HepG2 (cell line): ENCODE measurements at regions of chr3 and their contacts with region 1.

Region 1: DNA sequence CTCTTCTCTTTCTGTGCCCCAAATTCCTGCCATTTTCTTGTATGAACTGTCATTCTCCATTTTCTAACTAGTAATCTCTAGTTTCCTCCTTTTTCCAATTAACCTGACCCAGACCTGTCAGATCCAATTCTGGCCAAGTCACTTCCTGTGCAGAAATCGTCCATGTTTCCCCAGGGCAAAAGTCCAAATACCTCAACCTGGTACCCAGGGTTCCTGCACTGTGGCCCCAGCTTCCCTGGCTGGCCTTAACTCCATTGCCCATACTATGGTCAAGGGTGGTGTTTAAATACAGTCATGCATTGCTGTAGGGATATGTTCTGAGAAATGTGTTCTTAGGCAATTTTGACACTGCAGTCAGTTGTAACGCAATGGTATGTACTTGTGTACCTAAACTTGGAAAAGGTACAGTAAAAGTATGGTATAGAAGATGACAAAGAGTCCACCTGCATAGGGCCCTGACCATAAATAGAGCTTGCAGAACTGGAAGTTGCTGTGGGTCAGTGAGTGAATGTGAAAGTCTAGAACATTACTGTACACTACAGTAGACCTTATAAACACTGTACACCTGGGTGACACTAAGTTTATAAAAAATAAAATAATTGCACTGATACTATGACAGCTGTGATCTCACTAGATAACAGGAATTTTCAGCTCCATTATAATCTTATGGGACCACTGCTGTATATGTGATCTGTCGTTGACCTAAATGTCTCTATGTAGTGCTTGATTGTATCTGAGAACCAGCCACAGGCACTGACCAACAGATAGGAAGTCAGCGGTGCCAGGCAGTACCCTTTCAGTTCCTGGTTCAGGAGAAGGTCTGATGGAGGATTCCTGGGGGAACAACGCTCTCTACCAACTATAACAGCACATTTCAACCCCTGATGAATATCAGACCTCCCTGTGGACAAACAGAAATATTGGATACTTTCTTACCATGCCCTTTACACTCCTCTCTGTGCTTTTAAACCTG is 336.1 kb upstream of the PROK2 start:
- DNase-seq: no peak
- ATAC-seq: peak; percentile 60
- H3K4me3 ChIP-seq: no peak overlapping the region
- H3K27ac ChIP-seq: no peak overlapping the region
- H3K4me1 ChIP-seq: peaks cover 21% of the 10 kb centered on the region
- H3K27me3 ChIP-seq: no peaks in the 10 kb centered on the region
- CTCF ChIP-seq: no peak
- EP300 ChIP-seq: no peak
- POLR2A ChIP-seq: no peak
- RAD21 ChIP-seq: no peak

Region 2: GRCh38 chr3:72143322-72143721 is 22.2 kb after region 1 on chr3:
- CTCF ChIA-PET with region 1: no interaction called
- POLR2A ChIA-PET with region 1: no interaction called
- in situ Hi-C with region 1: no loop called
- intact Hi-C with region 1: loop called (anchors 2 kb)
- DNase-seq: peak; percentile 54
- ATAC-seq: peak; percentile 76
- H3K4me3 ChIP-seq: no peak overlapping the region; a peak in 1 of 6 replicates
- H3K27ac ChIP-seq: no peak overlapping the region
- H3K4me1 ChIP-seq: peaks cover 49% of the 10 kb centered on the region
- H3K27me3 ChIP-seq: no peaks in the 10 kb centered on the region; a peak in 1 of 5 replicates
- CTCF ChIP-seq: no peak
- EP300 ChIP-seq: no peak
- POLR2A ChIP-seq: no peak
- RAD21 ChIP-seq: no peak; the same call in 1 of the 2 replicates

Region 3: DNA sequence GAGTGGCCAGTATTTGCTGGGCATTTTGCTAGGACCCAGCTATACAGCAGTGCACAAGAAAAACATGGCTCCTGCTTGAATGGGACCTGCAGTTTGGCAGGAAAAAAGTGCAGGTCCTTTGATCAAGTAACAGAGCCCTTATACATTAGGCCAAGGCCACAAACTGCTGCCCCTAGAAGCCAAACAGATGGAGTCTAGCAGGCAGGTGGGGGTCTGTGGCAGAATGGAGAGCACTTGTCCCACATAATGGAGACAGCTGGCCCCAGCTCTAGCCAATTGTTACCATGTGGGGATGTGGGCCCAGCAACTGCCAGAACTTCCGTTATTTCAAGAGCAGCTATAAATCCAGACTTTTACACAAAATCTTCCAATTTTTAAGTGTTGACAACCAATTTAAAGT is 647.8 kb after region 1 on chr3:
- CTCF ChIA-PET with region 1: no interaction called
- POLR2A ChIA-PET with region 1: no interaction called
- in situ Hi-C with region 1: no loop called
- intact Hi-C with region 1: no loop called
- DNase-seq: no peak
- ATAC-seq: no peak
- H3K4me3 ChIP-seq: no peak overlapping the region
- H3K27ac ChIP-seq: no peak overlapping the region
- H3K4me1 ChIP-seq: no peaks in the 10 kb centered on the region
- H3K27me3 ChIP-seq: no peaks in the 10 kb centered on the region
- CTCF ChIP-seq: no peak
- EP300 ChIP-seq: no peak
- POLR2A ChIP-seq: no peak
- RAD21 ChIP-seq: no peak